Activated CD4-positive, alpha-beta memory T cell treated with anti-CD3 and anti-CD28 coated beads, Interleukin-2, amount 10 ng/mL, durations not matched to agents 7 days and 5 days (primary cell): ENCODE measurements at regions of chr12 and their contacts with region 1.

Region 1: GRCh38 chr12:121802846-121803630 is 771 bp upstream of the SETD1B start:
- DNase-seq: peak; percentile 92
- H3K4me3 Mint-ChIP-seq: peak overlapping the region; percentile 81
- H3K27ac Mint-ChIP-seq: peak overlapping the region; percentile 100
- H3K4me1 Mint-ChIP-seq: peaks cover 36% of the 10 kb centered on the region
- H3K27me3 Mint-ChIP-seq: no peaks in the 10 kb centered on the region

Region 2: GRCh38 chr12:121712461-121713256 is 90.4 kb before region 1 on chr12 and contains the start of gene TMEM120B:
- CTCF ChIA-PET with region 1: interaction called, 3 read pairs
- POLR2A ChIA-PET with region 1: interaction called, 18 read pairs
- DNase-seq: peak; percentile 87
- H3K4me3 Mint-ChIP-seq: peak within 1 kb of the TSS; percentile 93
- H3K27ac Mint-ChIP-seq: peak within 1 kb of the TSS; percentile 88
- H3K4me1 Mint-ChIP-seq: peaks cover 25% of the 10 kb centered on the region
- H3K27me3 Mint-ChIP-seq: no peaks in the 10 kb centered on the region
- total RNA-seq, gene TMEM120B: 5.1 to 5.8 TPM